ENCODE measurements at regions of chr7 and their contacts with region 1.

Region 1: DNA sequence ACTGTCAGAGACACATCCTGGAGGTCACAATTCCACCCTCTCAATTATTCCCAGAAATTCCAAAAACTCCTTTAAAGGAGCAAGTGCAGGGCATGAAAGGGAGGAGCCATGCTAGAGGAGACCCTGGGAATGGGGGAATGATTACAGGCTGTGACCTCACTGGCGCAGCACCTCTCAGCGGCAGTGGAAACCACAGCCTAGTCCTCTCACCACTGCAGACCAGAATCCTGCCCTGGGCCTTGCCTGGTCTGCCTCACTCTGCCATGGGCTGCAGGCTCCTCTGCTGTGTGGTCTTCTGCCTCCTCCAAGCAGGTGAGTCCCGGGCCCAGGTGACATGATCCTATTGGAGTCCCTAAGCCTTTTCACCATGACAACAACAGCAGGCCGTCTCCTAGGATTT is 50.5 kb upstream of the PRSS58 start:
- DNase-seq: no peak
- ATAC-seq: peak in 3 of 4 donors; percentile 26 to 49 (median 36)
- H3K4me3 ChIP-seq: no peak overlapping the region
- H3K27ac ChIP-seq: no peak overlapping the region
- H3K4me1 ChIP-seq: no peaks in the 10 kb centered on the region
- H3K27me3 ChIP-seq: peaks cover 0 to 3% of the 10 kb centered on the region in 2 donors
- CTCF ChIP-seq: no peak
- POLR2A ChIP-seq: no peak

Region 2: GRCh38 chr7:142345811-142346210 is 37.5 kb after region 1 on chr7:
- intact Hi-C with region 1: loop called in 1 of 2 experiments (anchors 2 kb)
- DNase-seq: no peak
- ATAC-seq: peak in 2 of 4 donors; percentile 10 to 18
- H3K4me3 ChIP-seq: no peak overlapping the region
- H3K27ac ChIP-seq: no peak overlapping the region
- H3K4me1 ChIP-seq: no peaks in the 10 kb centered on the region
- H3K27me3 ChIP-seq: no peaks in the 10 kb centered on the region
- CTCF ChIP-seq: no peak
- POLR2A ChIP-seq: no peak

Measured in right lobe of liver (tissue), 6 donors.